CD14-positive monocyte (primary cell): ENCODE measurements at regions of chr22 and their contacts with region 1.

Region 1: DNA sequence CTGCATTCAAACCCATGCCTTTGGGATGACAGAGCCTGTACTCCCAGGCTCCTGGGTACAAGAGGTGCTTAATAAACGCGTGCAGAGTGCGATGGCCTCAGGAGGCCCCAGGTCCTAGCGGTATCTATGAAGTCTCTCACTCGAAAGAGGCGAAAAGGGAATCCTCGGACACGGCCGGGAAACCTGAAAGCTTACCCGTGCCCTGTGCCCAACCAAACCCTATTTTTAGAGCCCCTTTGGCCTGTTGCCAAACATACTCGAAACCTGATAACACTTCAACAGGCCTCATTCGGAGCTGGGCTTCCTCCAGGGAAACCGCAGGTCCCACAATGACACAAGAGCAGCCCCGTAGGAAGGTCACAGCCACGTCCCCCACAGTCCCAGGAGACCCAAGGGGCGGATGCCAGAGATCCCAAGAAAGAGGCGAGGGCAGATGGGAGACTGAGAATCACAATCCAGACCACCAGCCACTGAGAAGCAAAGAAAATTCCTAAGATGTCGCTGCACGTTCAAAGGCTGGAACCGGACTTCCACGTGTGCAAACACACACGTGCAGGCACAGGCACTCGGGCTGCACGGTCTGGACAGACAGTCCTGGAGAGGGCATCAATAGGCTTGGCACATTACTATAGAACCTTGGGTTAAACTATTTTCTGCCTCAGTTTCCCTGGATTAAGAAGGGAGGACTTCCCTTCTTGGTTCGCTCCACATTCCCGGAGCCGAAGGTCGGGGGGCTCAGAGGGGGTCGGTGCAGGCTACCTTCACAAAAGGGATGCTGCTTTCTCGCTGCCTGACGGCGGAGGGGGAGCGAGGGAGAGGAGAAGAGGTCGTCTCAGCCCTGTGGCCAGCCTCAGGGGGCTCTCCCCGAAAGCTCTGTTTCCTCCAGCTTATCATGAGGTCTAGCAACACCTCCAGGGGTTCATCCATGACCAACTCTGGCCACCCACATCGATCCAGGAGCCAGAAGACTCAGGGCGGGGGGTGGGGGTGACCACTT is 8.2 kb downstream of the PDGFB start:
- DNase-seq: peak in 1 of 3 donors; percentile 39
- H3K4me3 ChIP-seq: no peak overlapping the region
- H3K4me3 Mint-ChIP-seq: peak overlapping the region in 1 of 2 donors; percentile 90
- H3K27ac ChIP-seq: no peak overlapping the region
- H3K27ac Mint-ChIP-seq: peak overlapping the region in 1 of 7 donors; percentile 39
- H3K4me1 ChIP-seq: peaks cover 20 to 32% of the 10 kb centered on the region in 2 donors
- H3K4me1 Mint-ChIP-seq: peaks cover 49% of the 10 kb centered on the region
- H3K27me3 ChIP-seq: peaks cover 72 to 100% of the 10 kb centered on the region in 2 donors
- H3K27me3 Mint-ChIP-seq: peaks cover 97 to 100% (median 100%) of the 10 kb centered on the region in 3 donors
- CTCF ChIP-seq: no peak

Region 2: DNA sequence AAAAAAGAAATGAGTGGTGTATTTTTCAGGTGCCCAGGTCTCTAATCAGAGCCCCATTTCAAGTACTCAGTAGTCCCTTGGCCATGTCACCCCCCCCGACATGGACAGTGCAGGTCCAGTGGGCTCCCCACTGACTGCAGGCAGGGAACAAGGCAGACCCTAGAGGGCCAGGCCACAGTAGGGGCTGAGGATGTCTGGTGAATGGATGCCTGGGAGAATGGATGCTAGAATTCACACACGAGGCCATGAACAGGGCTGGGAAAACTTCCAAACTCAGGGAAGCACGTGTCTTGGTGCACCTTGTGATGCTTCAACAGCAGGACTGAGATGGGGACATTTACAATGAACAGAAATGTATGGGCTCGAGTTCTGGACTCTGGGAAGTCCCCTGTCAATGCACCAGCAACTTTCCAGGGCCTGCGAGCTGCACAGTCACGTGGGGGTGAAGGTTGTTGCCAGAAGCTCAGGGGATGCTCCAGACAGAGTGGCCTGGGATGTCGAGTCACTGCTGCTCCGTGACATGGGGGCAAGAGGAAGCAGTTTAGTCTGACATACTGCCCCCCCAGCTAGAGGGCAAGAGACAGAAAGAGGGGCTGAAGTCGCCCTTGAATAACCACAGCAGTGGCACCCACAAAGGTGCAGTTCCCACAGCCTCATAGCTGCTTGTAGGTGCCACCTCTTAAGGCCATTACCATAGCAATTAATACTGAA is 156.4 kb before region 1 on chr22:
- intact Hi-C with region 1: no loop called
- DNase-seq: no peak
- H3K4me3 ChIP-seq: no peak overlapping the region
- H3K4me3 Mint-ChIP-seq: no peak overlapping the region
- H3K27ac ChIP-seq: no peak overlapping the region
- H3K27ac Mint-ChIP-seq: peak overlapping the region in 1 of 7 donors; percentile 13
- H3K4me1 ChIP-seq: peaks cover 13 to 22% of the 10 kb centered on the region in 2 donors
- H3K4me1 Mint-ChIP-seq: peaks cover 34% of the 10 kb centered on the region
- H3K27me3 ChIP-seq: no peaks in the 10 kb centered on the region
- H3K27me3 Mint-ChIP-seq: peaks cover 0 to 2% (median 0%) of the 10 kb centered on the region in 3 donors
- CTCF ChIP-seq: no peak

Region 3: GRCh38 chr22:39170825-39171622 is 65.6 kb before region 1 on chr22:
- intact Hi-C with region 1: loop called in 1 of 2 experiments (anchors 5 kb)
- DNase-seq: peak; percentile 74 to 78 (median 77)
- H3K4me3 ChIP-seq: no peak overlapping the region
- H3K4me3 Mint-ChIP-seq: peak overlapping the region; percentile 48 to 54
- H3K27ac ChIP-seq: no peak overlapping the region
- H3K27ac Mint-ChIP-seq: no peak overlapping the region
- H3K4me1 ChIP-seq: peaks cover 11 to 12% of the 10 kb centered on the region in 2 donors
- H3K4me1 Mint-ChIP-seq: peaks cover 21% of the 10 kb centered on the region
- H3K27me3 ChIP-seq: peaks cover 0 to 23% of the 10 kb centered on the region in 2 donors
- H3K27me3 Mint-ChIP-seq: peaks cover 21 to 55% (median 35%) of the 10 kb centered on the region in 3 donors
- CTCF ChIP-seq: peak; percentile 96

Region 4: DNA sequence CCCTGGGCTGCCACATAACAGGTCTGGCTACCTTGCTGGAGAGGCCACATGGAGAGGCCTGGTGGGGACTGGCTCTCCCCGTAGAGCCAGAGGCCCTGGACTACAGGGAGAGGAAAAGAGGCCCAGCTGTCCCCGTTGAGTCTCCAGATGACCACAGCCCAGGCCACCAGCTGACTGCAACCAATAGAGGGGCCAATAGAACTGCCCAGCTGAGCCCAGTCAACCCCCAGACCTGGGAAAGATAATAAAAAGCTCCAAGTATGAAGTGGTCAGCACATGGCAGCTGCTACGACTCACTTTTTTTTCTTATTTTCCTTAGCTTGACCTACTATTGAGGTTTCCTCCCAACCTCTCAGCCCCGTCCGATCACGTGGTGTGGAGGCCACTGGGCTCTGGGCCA is 10.3 kb before region 1 on chr22:
- intact Hi-C with region 1: loop called in 1 of 2 experiments (anchors 1 kb)
- DNase-seq: no peak
- H3K4me3 ChIP-seq: no peak overlapping the region
- H3K4me3 Mint-ChIP-seq: no peak overlapping the region
- H3K27ac ChIP-seq: no peak overlapping the region
- H3K27ac Mint-ChIP-seq: no peak overlapping the region
- H3K4me1 ChIP-seq: no peaks in the 10 kb centered on the region
- H3K4me1 Mint-ChIP-seq: peaks cover 9% of the 10 kb centered on the region
- H3K27me3 ChIP-seq: peaks cover 16 to 73% of the 10 kb centered on the region in 2 donors
- H3K27me3 Mint-ChIP-seq: peaks cover 66 to 94% (median 72%) of the 10 kb centered on the region in 3 donors
- CTCF ChIP-seq: no peak